Activated naive CD4-positive, alpha-beta T cell treated with anti-CD3 and anti-CD28 coated beads for 36 hours (primary cell): ENCODE measurements at regions of chr5 and their contacts with region 1.

Region 1: GRCh38 chr5:40578501-40579451 is 100.9 kb upstream of the PTGER4 start:
- DNase-seq: peak; percentile 87
- H3K4me3 Mint-ChIP-seq: peak overlapping the region; percentile 66
- H3K27ac Mint-ChIP-seq: peak overlapping the region; percentile 92
- H3K4me1 Mint-ChIP-seq: peaks cover 37% of the 10 kb centered on the region
- H3K27me3 Mint-ChIP-seq: no peaks in the 10 kb centered on the region

Region 2: DNA sequence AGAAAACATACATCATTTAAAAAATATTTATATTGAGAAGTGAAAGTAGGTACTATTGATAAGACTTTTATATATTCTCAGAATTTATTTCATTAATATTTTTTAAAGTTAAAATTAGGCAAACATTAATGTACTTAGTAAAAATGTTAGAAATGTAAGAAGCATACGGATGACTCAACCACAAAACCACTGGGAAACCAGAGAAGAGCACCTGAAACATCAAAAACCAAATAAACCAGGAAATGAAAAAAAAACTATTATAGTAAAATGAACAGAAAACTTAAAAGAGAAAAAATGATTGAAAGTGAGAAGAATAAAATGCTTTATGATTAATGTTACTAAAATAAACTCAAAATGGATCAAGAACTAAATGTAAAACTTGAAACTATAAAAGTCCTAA is 920.8 kb before region 1 on chr5:
- CTCF ChIA-PET with region 1: no interaction called
- intact Hi-C with region 1: loop called (anchors 5 kb)
- DNase-seq: peak; percentile 11
- H3K4me3 Mint-ChIP-seq: no peak overlapping the region
- H3K27ac Mint-ChIP-seq: no peak overlapping the region
- H3K4me1 Mint-ChIP-seq: peaks cover 25% of the 10 kb centered on the region
- H3K27me3 Mint-ChIP-seq: peaks cover 14% of the 10 kb centered on the region

Region 3: DNA sequence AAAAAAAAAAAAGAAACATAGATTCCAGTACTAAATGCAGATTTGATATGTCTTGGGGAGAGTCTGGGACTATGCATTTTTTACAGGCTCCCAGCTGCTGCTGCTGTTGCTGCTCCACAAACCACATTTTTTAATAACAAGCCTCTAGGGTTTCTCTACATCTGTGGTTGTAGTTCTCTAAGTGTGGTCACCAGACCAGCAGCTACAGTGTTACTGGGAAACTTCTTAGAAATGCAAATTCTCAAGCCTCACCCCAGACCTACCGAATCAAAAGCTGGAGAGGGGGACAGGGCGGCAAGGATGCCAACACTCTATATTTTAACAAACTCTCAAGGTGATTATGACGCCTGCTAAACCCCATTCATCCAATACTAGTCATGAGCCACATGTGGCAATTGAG is 192.5 kb before region 1 on chr5:
- CTCF ChIA-PET with region 1: no interaction called
- intact Hi-C with region 1: loop called (anchors 1 kb)
- DNase-seq: peak; percentile 34
- H3K4me3 Mint-ChIP-seq: no peak overlapping the region
- H3K27ac Mint-ChIP-seq: peak overlapping the region; percentile 85
- H3K4me1 Mint-ChIP-seq: peaks cover 81% of the 10 kb centered on the region
- H3K27me3 Mint-ChIP-seq: no peaks in the 10 kb centered on the region

Region 4: GRCh38 chr5:40486437-40487275 is 92.1 kb before region 1 on chr5:
- CTCF ChIA-PET with region 1: interaction called, 3 read pairs
- intact Hi-C with region 1: loop called (anchors 1 kb)
- DNase-seq: peak; percentile 85
- H3K4me3 Mint-ChIP-seq: peak overlapping the region; percentile 1
- H3K27ac Mint-ChIP-seq: peak overlapping the region; percentile 92
- H3K4me1 Mint-ChIP-seq: peaks cover 83% of the 10 kb centered on the region
- H3K27me3 Mint-ChIP-seq: no peaks in the 10 kb centered on the region

Region 5: GRCh38 chr5:40615586-40616170 is 36.9 kb after region 1 on chr5:
- CTCF ChIA-PET with region 1: no interaction called
- intact Hi-C with region 1: loop called (anchors 1 kb)
- DNase-seq: no peak
- H3K4me3 Mint-ChIP-seq: no peak overlapping the region
- H3K27ac Mint-ChIP-seq: peak overlapping the region; percentile 1
- H3K4me1 Mint-ChIP-seq: peaks cover 15% of the 10 kb centered on the region
- H3K27me3 Mint-ChIP-seq: no peaks in the 10 kb centered on the region

Region 6: GRCh38 chr5:40679155-40679913 is 100.6 kb after region 1 on chr5:
- CTCF ChIA-PET with region 1: no interaction called
- intact Hi-C with region 1: loop called (anchors 1 kb)
- DNase-seq: peak; percentile 95
- H3K4me3 Mint-ChIP-seq: peak overlapping the region; percentile 89
- H3K27ac Mint-ChIP-seq: peak overlapping the region; percentile 99
- H3K4me1 Mint-ChIP-seq: peaks cover 41% of the 10 kb centered on the region
- H3K27me3 Mint-ChIP-seq: no peaks in the 10 kb centered on the region

Region 7: DNA sequence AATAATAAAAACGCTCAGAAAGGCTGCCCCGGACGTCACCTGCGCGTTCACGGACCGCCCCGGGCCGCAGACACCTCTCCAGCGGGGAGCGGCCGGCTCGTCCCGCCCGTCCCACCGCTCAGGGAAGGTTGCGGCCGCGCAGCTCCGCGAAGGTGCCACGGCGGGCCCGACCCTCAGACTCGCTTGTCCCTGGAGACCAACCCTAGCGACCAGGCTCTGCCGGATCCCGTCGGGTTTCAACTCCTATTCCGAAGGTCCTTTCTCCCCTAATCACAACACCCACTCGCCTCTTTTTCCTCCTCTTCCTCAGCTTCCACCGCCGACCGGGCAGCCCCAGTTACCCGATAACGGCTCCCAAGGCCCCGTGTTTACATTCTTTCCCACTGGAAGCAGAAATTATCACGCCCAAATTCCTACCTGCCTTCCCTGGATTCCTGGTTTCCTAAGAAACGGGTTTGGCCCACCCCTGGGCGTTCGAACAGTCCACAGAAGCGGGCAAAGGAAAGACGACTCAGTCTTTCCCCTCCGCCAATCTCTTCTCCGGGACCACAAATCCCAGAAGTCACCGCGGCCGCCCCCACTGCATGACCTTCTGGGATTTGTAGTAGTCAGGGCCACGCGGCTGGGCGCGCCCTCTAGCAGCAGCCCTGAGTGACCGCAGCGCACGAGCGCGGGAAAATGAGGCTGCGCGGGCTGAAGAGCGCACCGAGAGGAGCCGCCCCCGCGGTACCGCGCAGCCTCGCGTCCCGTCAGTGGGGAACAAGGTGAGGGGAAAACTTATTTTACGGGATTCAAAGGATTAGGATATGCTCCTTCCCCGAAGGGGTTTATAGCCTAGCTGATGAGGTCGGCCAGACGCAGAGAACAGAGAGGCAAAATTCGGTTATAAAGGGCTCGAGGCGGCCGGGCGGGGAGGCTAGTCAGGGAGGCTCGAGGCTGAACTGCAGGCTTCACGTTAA is 176.9 kb after region 1 on chr5 and contains the start of gene TTC33:
- CTCF ChIA-PET with region 1: no interaction called
- intact Hi-C with region 1: loop called (anchors 1 kb)
- DNase-seq: peak; percentile 98
- H3K4me3 Mint-ChIP-seq: no peak within 1 kb of the TSS
- H3K27ac Mint-ChIP-seq: no peak within 1 kb of the TSS
- H3K4me1 Mint-ChIP-seq: peaks cover 10% of the 10 kb centered on the region
- H3K27me3 Mint-ChIP-seq: no peaks in the 10 kb centered on the region
- total RNA-seq, gene TTC33: 24.4 to 27.4 TPM

Region 8: DNA sequence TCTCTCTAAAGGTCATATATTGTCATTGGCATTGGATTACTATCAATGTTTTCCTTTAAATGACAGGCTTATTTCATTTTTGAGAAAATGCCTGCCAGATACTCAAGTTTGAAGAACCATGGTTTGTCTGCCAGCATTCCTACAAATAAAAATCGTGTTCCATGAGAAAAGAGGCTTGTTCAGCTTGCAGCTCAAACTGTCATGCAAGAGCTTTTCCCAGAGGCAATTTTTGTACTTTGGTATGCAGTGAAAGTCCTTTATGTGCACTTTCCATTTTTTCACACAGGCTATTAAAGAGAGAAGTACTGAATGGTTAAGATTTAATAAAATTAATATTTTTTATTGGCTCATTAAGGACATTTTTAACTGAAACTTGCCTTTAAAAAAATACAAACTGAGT is 1456.8 kb after region 1 on chr5:
- CTCF ChIA-PET with region 1: no interaction called
- intact Hi-C with region 1: no loop called
- DNase-seq: no peak
- H3K4me3 Mint-ChIP-seq: no peak overlapping the region
- H3K27ac Mint-ChIP-seq: no peak overlapping the region
- H3K4me1 Mint-ChIP-seq: no peaks in the 10 kb centered on the region
- H3K27me3 Mint-ChIP-seq: peaks cover 17% of the 10 kb centered on the region